Panc1 (cell line): ENCODE measurements at regions of chr4 and their contacts with region 1.

Region 1: GRCh38 chr4:145011636-145012035 is 86.4 kb downstream of the ANAPC10 start:
- DNase-seq: no peak
- ATAC-seq: no peak
- H3K4me3 ChIP-seq: no peak overlapping the region
- H3K27ac ChIP-seq: no peak overlapping the region
- H3K4me1 ChIP-seq: no peaks in the 10 kb centered on the region
- H3K27me3 ChIP-seq: no peaks in the 10 kb centered on the region
- CTCF ChIP-seq: no peak

Region 2: DNA sequence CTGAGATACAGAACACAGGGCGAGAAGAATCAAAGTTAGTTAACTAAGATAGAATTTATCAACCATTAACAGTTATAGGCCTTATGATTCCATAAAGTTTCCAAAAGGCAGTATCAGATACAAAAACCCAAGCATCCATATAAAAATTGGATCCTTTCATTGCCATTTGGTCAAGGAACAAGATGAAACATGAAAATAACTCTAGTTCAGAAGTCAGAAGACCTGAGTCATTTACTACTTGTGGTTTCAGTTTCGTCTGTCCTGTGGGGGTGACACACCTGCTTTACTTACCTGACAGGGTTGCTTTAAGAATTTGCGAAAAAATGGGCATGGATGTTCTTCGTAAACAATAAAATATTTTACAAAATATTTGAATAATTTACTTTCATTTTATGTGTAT is 44.5 kb before region 1 on chr4:
- CTCF ChIA-PET with region 1: no interaction called
- POLR2A ChIA-PET with region 1: no interaction called
- in situ Hi-C with region 1: no loop called
- intact Hi-C with region 1: loop called (anchors 2 kb)
- DNase-seq: no peak
- ATAC-seq: no peak
- H3K4me3 ChIP-seq: no peak overlapping the region
- H3K27ac ChIP-seq: no peak overlapping the region
- H3K4me1 ChIP-seq: no peaks in the 10 kb centered on the region
- H3K27me3 ChIP-seq: no peaks in the 10 kb centered on the region
- CTCF ChIP-seq: no peak